ENCODE measurements at regions of chr10 and their contacts with region 1.

Region 1: DNA sequence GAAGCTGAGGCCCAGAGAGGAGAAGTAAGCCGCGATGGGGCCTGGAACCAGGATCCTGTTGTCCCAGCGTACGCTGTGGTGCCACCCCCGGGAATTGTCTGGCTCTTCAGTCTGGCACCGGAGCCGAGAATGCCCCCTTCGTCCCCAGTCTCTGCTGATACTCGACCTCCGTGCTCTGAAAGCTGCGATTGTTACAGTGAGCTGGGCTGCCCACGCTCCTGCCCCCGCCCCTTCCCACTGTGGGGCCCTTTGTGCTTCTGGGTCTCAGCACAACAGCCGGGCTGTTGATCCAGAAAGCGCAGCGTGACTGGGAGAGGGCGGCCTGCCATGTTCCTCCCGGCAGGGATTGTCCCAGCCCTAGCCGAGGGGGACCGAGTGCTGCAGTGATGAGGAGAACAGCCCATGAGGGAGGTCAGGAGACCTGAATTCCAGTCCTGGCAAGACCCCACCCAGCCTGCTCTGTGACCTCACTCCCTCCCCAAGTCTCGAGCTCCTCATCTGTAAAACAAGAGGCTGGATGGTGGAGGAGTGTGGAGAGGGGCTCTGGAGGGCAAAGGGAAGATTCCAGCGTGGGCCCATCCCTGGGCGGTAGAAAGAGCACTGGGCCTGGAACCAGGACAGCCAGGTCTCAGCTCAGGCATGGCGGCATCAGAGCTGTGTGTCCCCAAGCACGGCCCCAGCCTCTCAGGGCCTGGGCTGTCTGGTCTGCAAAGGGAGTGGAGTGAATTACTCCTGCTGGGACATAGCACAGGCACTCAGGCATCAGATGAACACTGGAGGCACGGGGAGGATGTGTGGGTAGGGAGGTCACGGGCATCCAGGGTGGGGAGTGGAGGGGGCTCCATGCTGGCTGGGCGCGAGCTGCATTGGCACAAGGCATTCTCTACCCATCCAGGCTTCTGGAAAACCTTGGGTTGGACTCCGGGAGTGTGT is 43.6 kb downstream of the TSPAN15 start:
- DNase-seq: peak; percentile 79
- H3K4me3 ChIP-seq: no peak overlapping the region
- H3K27ac ChIP-seq: peak overlapping the region; percentile 82 to 93 (median 89)
- H3K4me1 ChIP-seq: peaks cover 0 to 98% (median 95%) of the 10 kb centered on the region in 4 donors
- H3K27me3 ChIP-seq: no peaks in the 10 kb centered on the region
- CTCF ChIP-seq: no peak
- EP300 ChIP-seq: no peak
- POLR2A ChIP-seq: no peak

Region 2: DNA sequence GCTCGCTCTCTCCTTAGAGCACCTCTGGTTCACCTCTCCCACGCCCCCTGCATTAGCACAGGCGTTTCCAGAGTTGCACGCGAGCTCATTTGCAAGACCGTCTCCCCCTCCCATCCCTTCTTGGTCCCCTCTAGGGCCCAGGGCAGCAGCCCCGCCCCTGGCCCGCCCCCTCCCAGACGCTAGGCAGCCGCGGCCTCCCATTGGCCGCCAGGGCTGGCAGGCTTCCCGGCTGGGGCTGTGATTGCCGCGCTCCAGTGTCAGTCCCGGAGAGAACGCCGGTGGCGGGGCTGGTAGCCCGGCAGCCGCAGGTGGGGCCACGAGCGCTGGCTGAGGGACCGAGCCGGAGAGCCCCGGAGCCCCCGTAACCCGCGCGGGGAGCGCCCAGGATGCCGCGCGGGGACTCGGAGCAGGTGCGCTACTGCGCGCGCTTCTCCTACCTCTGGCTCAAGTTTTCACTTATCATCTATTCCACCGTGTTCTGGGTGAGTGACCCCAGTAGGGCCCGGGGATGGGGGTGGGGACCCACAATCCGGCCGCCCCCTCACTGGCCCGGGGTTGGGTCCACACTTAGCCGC is 43.6 kb before region 1 on chr10 and contains the start of gene TSPAN15:
- intact Hi-C with region 1: loop called (anchors 5 kb)
- DNase-seq: peak; percentile 95
- H3K4me3 ChIP-seq: peak within 1 kb of the TSS; percentile 64 to 86 (median 83)
- H3K27ac ChIP-seq: peak within 1 kb of the TSS; percentile 85 to 93 (median 92)
- H3K4me1 ChIP-seq: peaks cover 0 to 72% (median 68%) of the 10 kb centered on the region in 4 donors
- H3K27me3 ChIP-seq: no peaks in the 10 kb centered on the region
- CTCF ChIP-seq: peak in 1 of 4 experiments; percentile 8
- EP300 ChIP-seq: no peak
- POLR2A ChIP-seq: peak; percentile 79 to 88
- total RNA-seq, gene TSPAN15: 55.4 to 76.4 (median 67.4) TPM

Region 3: DNA sequence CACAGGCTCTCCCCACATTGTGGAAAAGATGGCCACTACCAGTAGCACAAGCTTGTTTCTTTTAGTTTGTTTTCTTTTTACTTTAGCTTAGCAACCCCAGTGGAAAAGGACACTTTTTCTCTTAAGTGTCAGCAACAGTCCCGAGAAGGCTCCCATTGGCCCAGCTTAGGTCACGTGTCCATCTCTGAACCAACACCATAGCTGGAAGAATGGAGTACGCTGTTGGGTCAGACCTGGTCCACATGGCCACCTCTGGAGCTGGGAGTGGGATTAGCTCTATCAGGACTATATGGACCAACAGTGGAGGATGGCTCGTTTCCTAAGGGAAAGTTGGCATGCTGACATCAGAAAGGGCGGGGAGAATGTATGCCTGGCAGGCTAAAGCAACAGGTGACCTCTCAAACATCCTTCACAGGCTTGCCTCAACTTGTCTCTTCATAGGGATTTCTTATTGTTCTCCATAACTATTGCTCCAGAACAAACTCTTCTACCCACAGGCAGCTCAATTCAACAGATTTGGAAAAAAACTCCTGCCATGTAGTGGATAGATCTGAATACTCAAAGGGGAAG is 106.0 kb after region 1 on chr10:
- intact Hi-C with region 1: no loop called
- DNase-seq: no peak
- H3K4me3 ChIP-seq: no peak overlapping the region
- H3K27ac ChIP-seq: no peak overlapping the region
- H3K4me1 ChIP-seq: no peaks in the 10 kb centered on the region
- H3K27me3 ChIP-seq: peaks cover 0 to 7% (median 0%) of the 10 kb centered on the region in 3 donors
- CTCF ChIP-seq: no peak
- EP300 ChIP-seq: no peak
- POLR2A ChIP-seq: no peak